ENCODE measurements at regions of chr17 and their contacts with region 1.

Region 1: DNA sequence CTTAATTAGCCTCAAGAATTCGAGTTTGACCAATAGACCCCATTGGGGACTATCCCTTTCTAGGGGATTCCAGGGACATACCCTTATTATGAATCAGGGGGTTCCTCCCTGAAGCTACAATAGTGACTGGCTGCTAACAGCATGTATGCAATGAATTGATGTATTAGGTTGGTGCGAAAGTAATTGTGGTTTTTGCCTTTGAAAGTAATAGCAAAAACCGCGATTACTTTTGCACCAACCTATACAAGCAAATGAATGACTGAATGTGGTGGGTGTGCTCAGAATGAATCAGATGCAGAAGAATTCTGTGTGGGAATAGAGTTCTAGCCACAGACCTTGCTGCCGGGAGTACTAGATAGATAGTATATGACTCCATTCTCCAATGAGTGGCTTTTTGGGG is 76.7 kb downstream of the HLF start:
- DNase-seq: no peak
- H3K4me3 Mint-ChIP-seq: no peak overlapping the region
- H3K27ac Mint-ChIP-seq: no peak overlapping the region
- H3K4me1 Mint-ChIP-seq: peaks cover 43% of the 10 kb centered on the region
- H3K27me3 Mint-ChIP-seq: peaks cover 27% of the 10 kb centered on the region

Region 2: DNA sequence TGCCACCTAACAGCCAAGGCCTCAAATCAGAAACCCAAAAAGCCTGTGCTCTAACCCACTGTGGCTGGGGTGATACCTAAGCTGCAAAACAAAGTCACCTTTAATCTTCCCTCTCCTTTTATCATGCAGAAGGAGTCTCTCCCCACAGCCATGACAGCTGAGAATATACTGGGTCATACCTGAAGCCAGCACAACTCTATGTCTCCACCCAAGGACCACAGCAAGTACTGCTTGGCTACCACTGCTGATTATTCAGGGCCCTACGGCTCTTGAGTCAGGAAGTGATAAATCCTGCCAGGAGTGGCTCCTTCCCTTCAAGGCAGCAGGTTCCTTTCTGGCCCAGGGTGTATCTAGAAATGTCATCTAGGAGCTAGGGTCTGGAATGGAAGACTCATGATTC is 592.3 kb before region 1 on chr17:
- intact Hi-C with region 1: no loop called
- DNase-seq: no peak
- H3K4me3 Mint-ChIP-seq: no peak overlapping the region
- H3K27ac Mint-ChIP-seq: no peak overlapping the region
- H3K4me1 Mint-ChIP-seq: no peaks in the 10 kb centered on the region
- H3K27me3 Mint-ChIP-seq: no peaks in the 10 kb centered on the region

Region 3: GRCh38 chr17:55053855-55054254 is 287.6 kb before region 1 on chr17:
- intact Hi-C with region 1: no loop called
- DNase-seq: no peak
- H3K4me3 Mint-ChIP-seq: no peak overlapping the region
- H3K27ac Mint-ChIP-seq: no peak overlapping the region
- H3K4me1 Mint-ChIP-seq: no peaks in the 10 kb centered on the region
- H3K27me3 Mint-ChIP-seq: no peaks in the 10 kb centered on the region

Region 4: DNA sequence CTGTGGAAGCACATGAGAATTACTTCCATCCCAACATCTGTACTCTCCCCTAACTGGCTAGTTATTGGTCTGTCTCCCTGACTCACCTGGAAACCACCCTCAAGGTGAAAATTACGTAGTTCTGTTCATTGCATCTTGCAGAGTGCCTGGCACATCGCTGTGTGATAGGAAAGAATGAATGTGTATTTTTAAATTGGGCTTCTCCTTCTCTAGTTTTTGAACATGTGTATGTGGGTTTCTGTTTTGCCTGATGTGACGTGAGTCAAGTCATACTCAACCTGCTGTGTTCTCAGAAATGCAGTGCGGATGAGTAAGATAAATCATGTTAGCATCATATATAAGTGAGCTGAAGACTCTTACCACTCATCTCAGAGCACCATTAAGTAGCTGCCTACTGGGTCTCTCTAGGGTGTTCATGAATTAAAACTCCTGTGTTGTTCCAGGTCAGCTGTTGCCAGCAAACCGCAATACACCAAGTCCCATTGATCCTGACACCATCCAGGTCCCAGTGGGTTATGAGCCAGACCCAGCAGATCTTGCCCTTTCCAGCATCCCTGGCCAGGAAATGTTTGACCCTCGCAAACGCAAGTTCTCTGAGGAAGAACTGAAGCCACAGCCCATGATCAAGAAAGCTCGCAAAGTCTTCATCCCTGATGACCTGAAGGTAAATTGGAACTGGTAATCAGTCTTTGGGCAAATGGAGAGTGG is 26.5 kb before region 1 on chr17:
- intact Hi-C with region 1: loop called (anchors 1 kb)
- DNase-seq: peak; percentile 74
- H3K4me3 Mint-ChIP-seq: peak overlapping the region; percentile 25
- H3K27ac Mint-ChIP-seq: peak overlapping the region; percentile 82
- H3K4me1 Mint-ChIP-seq: peaks cover 15% of the 10 kb centered on the region
- H3K27me3 Mint-ChIP-seq: peaks cover 3% of the 10 kb centered on the region

Region 5: GRCh38 chr17:55327225-55328088 is 14.0 kb before region 1 on chr17:
- intact Hi-C with region 1: no loop called
- DNase-seq: no peak
- H3K4me3 Mint-ChIP-seq: no peak overlapping the region
- H3K27ac Mint-ChIP-seq: no peak overlapping the region
- H3K4me1 Mint-ChIP-seq: no peaks in the 10 kb centered on the region
- H3K27me3 Mint-ChIP-seq: peaks cover 13% of the 10 kb centered on the region

Region 6: GRCh38 chr17:55576996-55577586 is 235.7 kb after region 1 on chr17:
- intact Hi-C with region 1: loop called (anchors 2 kb)
- DNase-seq: peak; percentile 81
- H3K4me3 Mint-ChIP-seq: no peak overlapping the region
- H3K27ac Mint-ChIP-seq: no peak overlapping the region
- H3K4me1 Mint-ChIP-seq: peaks cover 3% of the 10 kb centered on the region
- H3K27me3 Mint-ChIP-seq: peaks cover 23% of the 10 kb centered on the region